ENCODE measurements at regions of chr11 and their contacts with region 1.

Region 1: DNA sequence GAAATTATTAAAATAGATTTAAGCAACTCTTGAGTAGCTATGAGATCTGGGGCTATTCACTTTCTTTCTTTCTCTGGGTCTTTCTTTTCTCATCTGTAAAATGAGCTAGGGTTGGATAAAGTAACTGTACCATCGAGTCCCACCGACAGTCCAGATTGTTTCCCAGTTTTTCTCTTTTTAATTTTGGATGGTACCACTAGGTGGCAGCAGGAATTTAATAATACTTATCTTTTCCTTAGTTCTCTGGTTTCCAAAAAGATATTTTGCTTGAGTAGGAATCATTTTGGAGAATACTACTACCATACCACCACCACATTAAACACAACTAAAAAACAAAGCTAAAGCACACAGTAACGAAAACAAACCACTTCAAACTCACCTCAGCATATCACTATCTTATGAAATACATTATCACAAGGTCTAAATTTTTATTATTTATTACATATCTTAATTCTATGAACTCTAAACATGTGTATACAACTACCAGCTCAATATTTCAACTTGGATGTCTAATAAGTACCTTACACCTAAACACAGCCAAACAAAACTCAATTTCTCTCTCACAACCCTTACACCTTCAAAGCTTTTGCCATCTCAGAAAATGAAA is 584.0 kb downstream of the KCNA4 start:
- DNase-seq: no peak
- ATAC-seq: no peak
- H3K4me3 ChIP-seq: no peak overlapping the region
- H3K27ac ChIP-seq: no peak overlapping the region
- H3K4me1 ChIP-seq: no peaks in the 10 kb centered on the region
- H3K27me3 ChIP-seq: no peaks in the 10 kb centered on the region

Region 2: DNA sequence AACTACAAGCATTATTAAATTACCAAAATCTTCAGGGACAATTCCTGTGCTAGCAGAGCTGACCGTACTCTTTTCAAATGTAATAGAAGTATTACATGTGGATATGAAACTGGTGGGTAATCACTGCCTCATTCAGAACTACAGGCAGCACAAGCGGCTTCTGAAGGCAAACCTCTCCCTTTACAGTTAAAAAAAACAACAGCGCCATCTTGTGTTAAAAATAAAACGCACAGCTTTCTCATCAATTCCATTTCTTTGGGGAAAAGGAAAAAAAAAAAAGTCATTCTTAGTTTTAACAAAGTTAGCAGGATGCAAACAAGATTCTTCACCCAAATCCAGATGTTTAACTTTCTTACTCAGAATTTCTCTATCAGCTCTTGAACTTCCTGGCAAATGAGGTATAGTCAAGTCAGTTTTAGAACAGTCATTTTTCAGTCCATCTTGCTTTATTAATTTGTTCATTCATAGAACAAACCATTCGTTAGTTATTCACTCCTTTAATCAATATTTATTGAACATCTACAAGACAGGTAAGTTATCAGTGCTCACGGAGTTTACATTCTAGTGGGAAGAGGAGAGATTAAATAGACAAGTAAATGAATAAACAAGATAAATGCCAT is 1485.1 kb after region 1 on chr11:
- intact Hi-C with region 1: loop called (anchors 10 kb)
- DNase-seq: no peak
- ATAC-seq: no peak
- H3K4me3 ChIP-seq: no peak overlapping the region
- H3K27ac ChIP-seq: no peak overlapping the region
- H3K4me1 ChIP-seq: no peaks in the 10 kb centered on the region
- H3K27me3 ChIP-seq: no peaks in the 10 kb centered on the region